CD4-positive, alpha-beta memory T cell (primary cell): ENCODE measurements at regions of chr6 and their contacts with region 1.

Region 1: DNA sequence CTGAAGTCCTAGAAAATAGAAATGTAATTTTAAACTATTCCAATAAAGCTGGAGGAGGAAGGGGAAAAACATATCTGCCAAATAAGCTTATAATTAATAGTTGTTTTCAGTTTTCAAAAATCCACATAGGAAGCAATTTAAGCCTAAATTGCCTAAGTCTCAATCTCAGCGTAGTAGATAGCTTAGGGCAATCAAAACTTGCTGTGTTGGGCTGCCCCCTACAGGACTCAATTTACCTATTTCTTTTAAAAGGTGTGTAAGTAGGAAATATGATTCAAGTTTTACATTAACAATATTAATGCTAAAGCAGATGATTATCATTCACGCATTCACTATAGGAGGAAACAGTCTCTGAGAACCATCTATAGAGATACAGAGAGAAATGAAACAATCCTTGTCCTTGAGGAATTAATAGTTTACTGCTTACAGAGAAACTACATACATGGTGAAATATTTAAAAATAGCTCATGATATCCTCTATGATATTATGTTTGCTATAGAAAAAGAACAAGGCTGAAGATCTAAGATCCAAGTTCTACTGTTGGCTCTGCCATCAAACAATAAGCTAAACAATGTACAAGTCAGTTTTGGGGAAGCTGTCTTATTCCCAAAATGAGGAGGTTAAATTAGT is 102.1 kb downstream of the ATG5 start:
- DNase-seq: peak; percentile 70 to 79 (median 73)
- H3K4me3 ChIP-seq: no peak overlapping the region
- H3K4me3 Mint-ChIP-seq: no peak overlapping the region
- H3K27ac ChIP-seq: no peak overlapping the region
- H3K27ac Mint-ChIP-seq: peak overlapping the region in 3 of 7 donors; percentile 40 to 74 (median 63)
- H3K4me1 ChIP-seq: peaks cover 8% of the 10 kb centered on the region
- H3K4me1 Mint-ChIP-seq: peaks cover 6 to 28% (median 13%) of the 10 kb centered on the region in 4 donors
- H3K27me3 ChIP-seq: no peaks in the 10 kb centered on the region
- H3K27me3 Mint-ChIP-seq: no peaks in the 10 kb centered on the region

Region 2: DNA sequence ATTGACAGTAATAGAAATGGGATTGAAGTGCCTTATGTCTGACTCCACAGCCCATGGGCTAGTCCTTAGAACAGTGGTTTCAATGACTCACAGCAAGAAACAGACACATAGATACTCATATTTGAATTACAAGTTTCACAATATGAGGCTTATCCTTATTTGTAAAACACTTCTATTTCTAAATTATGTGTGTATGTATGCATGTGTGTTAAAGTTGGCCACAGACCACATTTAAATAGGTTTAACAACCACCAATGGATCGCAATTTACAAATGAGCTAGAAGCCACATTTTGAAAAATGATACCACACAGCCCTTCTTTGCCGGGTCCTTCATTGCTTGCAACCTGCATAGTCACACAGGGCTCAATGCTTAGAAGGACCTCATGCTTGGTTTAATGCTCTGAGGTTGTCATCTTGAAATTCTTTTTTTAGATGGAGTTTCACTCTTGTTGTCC is 662.8 kb before region 1 on chr6:
- CTCF ChIA-PET with region 1: no interaction called
- POLR2A ChIA-PET with region 1: no interaction called
- intact Hi-C with region 1: no loop called
- DNase-seq: no peak
- H3K4me3 ChIP-seq: no peak overlapping the region
- H3K4me3 Mint-ChIP-seq: no peak overlapping the region
- H3K27ac ChIP-seq: no peak overlapping the region
- H3K27ac Mint-ChIP-seq: no peak overlapping the region
- H3K4me1 ChIP-seq: no peaks in the 10 kb centered on the region
- H3K4me1 Mint-ChIP-seq: no peaks in the 10 kb centered on the region
- H3K27me3 ChIP-seq: no peaks in the 10 kb centered on the region
- H3K27me3 Mint-ChIP-seq: no peaks in the 10 kb centered on the region

Region 3: DNA sequence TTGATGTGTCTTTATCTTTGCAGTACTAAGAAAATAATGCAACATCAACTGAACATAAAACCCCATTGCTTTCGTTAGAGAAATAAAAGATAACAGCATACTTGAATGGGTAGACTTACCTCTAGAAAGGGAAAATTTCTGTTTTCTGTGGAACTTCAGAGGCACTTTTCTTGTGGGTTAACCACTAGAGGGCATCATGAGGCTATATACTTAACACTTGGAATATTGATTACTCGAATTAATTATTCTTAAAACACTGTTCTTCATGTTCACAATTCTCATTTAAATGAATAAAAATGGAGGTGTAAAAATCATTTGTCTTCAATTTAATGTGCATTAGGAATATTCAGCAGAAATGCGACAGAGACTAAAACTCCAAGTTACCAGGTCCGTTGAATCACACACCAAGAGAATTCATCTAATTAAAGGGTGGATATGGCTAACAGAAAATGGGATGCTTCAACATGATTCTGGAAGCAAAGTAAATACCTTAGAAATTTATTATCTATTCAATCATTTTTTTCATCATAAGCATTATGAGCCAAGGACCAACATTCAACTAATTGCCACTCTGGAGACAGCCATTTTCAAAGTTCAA is 489.8 kb before region 1 on chr6:
- CTCF ChIA-PET with region 1: interaction called, 100 read pairs
- POLR2A ChIA-PET with region 1: no interaction called
- intact Hi-C with region 1: loop called (anchors 1 kb)
- DNase-seq: peak in 4 of 5 donors; percentile 39 to 48 (median 42)
- H3K4me3 ChIP-seq: no peak overlapping the region
- H3K4me3 Mint-ChIP-seq: no peak overlapping the region
- H3K27ac ChIP-seq: no peak overlapping the region
- H3K27ac Mint-ChIP-seq: peak overlapping the region in 1 of 7 donors; percentile 21
- H3K4me1 ChIP-seq: no peaks in the 10 kb centered on the region
- H3K4me1 Mint-ChIP-seq: peaks cover 5 to 12% (median 8%) of the 10 kb centered on the region in 4 donors
- H3K27me3 ChIP-seq: no peaks in the 10 kb centered on the region
- H3K27me3 Mint-ChIP-seq: no peaks in the 10 kb centered on the region

Region 4: DNA sequence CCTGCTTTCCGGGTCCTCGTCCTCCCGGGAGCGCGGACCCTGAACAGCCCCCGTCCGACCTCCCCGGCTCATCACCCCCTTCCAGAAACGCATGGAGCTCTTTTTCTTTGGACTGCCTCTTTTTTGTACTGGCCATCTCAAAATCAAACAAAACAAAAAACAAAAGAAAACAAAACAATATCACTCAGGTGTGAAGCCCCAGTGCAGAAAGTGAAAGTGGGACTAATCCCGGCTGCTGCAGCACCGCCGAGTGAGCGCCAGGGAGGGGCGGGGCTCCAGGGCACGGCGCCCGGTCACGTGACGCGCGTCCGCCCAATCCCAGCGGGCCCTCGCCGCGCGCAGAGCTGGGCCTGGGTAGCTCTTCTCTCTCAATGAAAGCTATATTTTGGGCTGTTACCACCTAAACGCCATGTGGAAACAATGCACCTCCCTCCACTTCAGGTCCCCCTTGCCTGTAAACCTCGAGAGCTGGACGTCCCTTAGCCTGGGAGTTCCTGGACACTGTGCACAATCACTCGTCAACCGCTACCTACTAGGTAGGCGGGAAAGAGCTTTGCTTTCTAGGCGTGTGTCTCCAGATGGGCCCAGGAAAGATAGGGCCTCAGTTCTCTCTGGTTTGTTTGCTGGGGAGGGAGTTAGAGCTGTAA is 231.0 kb before region 1 on chr6:
- CTCF ChIA-PET with region 1: interaction called, 52 read pairs
- POLR2A ChIA-PET with region 1: interaction called, 31 read pairs
- intact Hi-C with region 1: loop called (anchors 1 kb)
- DNase-seq: peak; percentile 89 to 91 (median 91)
- H3K4me3 ChIP-seq: peak overlapping the region; percentile 68 to 90
- H3K4me3 Mint-ChIP-seq: peak overlapping the region; percentile 88 to 98 (median 96)
- H3K27ac ChIP-seq: peak overlapping the region; percentile 72
- H3K27ac Mint-ChIP-seq: peak overlapping the region; percentile 87 to 98 (median 96)
- H3K4me1 ChIP-seq: peaks cover 36% of the 10 kb centered on the region
- H3K4me1 Mint-ChIP-seq: peaks cover 26 to 56% (median 30%) of the 10 kb centered on the region in 4 donors
- H3K27me3 ChIP-seq: peaks cover 4% of the 10 kb centered on the region
- H3K27me3 Mint-ChIP-seq: peaks cover 5 to 12% of the 10 kb centered on the region in 2 donors

Region 5: DNA sequence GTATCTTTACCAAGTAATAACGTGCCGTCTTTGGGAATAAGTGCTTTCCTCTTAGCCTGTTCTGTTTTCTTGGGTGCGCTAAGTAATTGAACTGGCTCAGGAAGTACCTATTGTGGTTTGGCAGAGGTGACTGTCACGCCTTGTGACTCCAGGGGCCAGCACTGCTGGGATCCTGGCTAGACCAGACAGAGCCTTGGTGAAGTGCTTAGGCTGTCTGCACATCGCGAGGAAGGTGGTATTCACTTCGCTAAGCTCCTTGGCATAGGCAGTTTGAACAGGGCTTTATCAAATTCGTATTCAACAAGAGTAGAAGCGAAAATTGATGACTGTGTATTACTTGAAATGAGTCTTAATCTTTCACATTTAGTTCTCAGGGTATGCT is 119.7 kb before region 1 on chr6:
- CTCF ChIA-PET with region 1: interaction called, 107 read pairs
- POLR2A ChIA-PET with region 1: interaction called, 31 read pairs
- intact Hi-C with region 1: no loop called
- DNase-seq: peak; percentile 50 to 86 (median 51)
- H3K4me3 ChIP-seq: peak overlapping the region; percentile 86 to 89
- H3K4me3 Mint-ChIP-seq: peak overlapping the region; percentile 95 to 99 (median 97)
- H3K27ac ChIP-seq: peak overlapping the region; percentile 69
- H3K27ac Mint-ChIP-seq: peak overlapping the region; percentile 91 to 98 (median 95)
- H3K4me1 ChIP-seq: peaks cover 75% of the 10 kb centered on the region
- H3K4me1 Mint-ChIP-seq: peaks cover 50 to 86% (median 68%) of the 10 kb centered on the region in 4 donors
- H3K27me3 ChIP-seq: no peaks in the 10 kb centered on the region
- H3K27me3 Mint-ChIP-seq: no peaks in the 10 kb centered on the region

Region 6: DNA sequence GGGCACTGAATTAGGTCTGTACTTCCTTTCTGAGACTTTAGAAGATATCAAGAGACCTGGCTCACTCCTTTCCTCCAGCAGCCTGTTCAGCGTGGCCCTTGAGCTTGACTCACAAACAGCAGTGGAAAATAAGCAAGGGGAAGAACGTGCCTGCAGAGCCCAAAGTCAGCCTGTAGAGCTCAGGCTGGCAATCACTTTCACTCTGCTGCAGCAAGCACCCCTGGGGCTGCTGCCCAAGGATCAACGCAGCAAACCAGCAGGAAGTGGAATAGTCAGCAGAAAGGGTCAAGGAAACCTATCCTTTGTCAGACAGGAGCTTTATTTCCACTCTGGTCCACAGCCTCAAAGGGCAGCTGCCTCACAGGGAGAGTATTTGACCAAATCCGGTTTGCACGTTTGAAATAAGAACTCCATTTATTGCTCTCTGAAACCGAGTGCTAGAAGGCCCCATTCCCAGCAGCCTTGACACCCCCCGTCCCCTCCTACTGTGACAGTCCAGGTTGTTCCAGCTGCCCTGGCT is 59.9 kb before region 1 on chr6:
- CTCF ChIA-PET with region 1: interaction called, 16 read pairs
- POLR2A ChIA-PET with region 1: interaction called, 4 read pairs
- intact Hi-C with region 1: no loop called
- DNase-seq: peak; percentile 44 to 73 (median 51)
- H3K4me3 ChIP-seq: peak overlapping the region in 1 of 2 donors; percentile 27
- H3K4me3 Mint-ChIP-seq: peak overlapping the region; percentile 46 to 78 (median 68)
- H3K27ac ChIP-seq: peak overlapping the region; percentile 57
- H3K27ac Mint-ChIP-seq: peak overlapping the region; percentile 74 to 98 (median 93)
- H3K4me1 ChIP-seq: peaks cover 32% of the 10 kb centered on the region
- H3K4me1 Mint-ChIP-seq: peaks cover 30 to 56% (median 42%) of the 10 kb centered on the region in 4 donors
- H3K27me3 ChIP-seq: no peaks in the 10 kb centered on the region
- H3K27me3 Mint-ChIP-seq: no peaks in the 10 kb centered on the region

Region 7: GRCh38 chr6:106206905-106207304 is 16.5 kb before region 1 on chr6:
- CTCF ChIA-PET with region 1: interaction called, 34 read pairs
- POLR2A ChIA-PET with region 1: no interaction called
- intact Hi-C with region 1: no loop called
- DNase-seq: no peak
- H3K4me3 ChIP-seq: no peak overlapping the region
- H3K4me3 Mint-ChIP-seq: no peak overlapping the region
- H3K27ac ChIP-seq: no peak overlapping the region
- H3K27ac Mint-ChIP-seq: no peak overlapping the region
- H3K4me1 ChIP-seq: no peaks in the 10 kb centered on the region
- H3K4me1 Mint-ChIP-seq: peaks cover 0 to 15% (median 9%) of the 10 kb centered on the region in 4 donors
- H3K27me3 ChIP-seq: no peaks in the 10 kb centered on the region
- H3K27me3 Mint-ChIP-seq: no peaks in the 10 kb centered on the region

Region 8: GRCh38 chr6:106300944-106301343 is 77.5 kb after region 1 on chr6:
- CTCF ChIA-PET with region 1: interaction called, 10 read pairs
- POLR2A ChIA-PET with region 1: no interaction called
- intact Hi-C with region 1: no loop called
- DNase-seq: peak in 4 of 5 donors; percentile 10 to 36 (median 25)
- H3K4me3 ChIP-seq: no peak overlapping the region
- H3K4me3 Mint-ChIP-seq: no peak overlapping the region
- H3K27ac ChIP-seq: no peak overlapping the region
- H3K27ac Mint-ChIP-seq: no peak overlapping the region
- H3K4me1 ChIP-seq: peaks cover 3% of the 10 kb centered on the region
- H3K4me1 Mint-ChIP-seq: peaks cover 6 to 12% (median 10%) of the 10 kb centered on the region in 4 donors
- H3K27me3 ChIP-seq: no peaks in the 10 kb centered on the region
- H3K27me3 Mint-ChIP-seq: no peaks in the 10 kb centered on the region